Ovary (tissue), 10 donors: ENCODE measurements at regions of chr19 and their contacts with region 1.

Region 1: DNA sequence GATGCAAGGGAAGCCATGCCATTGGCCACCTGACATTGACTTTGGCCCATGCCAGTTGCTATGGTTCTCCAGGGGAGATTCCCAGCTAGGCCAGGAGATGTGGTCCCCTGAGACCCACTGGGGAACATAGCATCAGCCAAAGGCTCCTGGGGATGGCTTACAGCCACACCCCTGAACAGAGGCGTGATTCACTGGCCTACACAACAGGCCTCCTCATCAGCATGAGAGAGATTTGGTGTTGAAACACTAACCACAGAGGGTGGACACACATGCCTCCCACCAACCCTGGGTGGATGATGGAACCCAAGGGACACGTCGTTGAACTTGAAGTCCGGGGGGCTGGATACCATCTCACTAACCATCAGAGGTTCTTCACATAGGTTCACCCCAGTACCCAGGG is 14.4 kb downstream of the IQCN start:
- DNase-seq: no peak
- H3K4me3 ChIP-seq: no peak overlapping the region
- H3K27ac ChIP-seq: no peak overlapping the region
- H3K4me1 ChIP-seq: no peaks in the 10 kb centered on the region
- H3K27me3 ChIP-seq: no peaks in the 10 kb centered on the region
- CTCF ChIP-seq: no peak
- EP300 ChIP-seq: no peak
- POLR2A ChIP-seq: no peak

Region 2: DNA sequence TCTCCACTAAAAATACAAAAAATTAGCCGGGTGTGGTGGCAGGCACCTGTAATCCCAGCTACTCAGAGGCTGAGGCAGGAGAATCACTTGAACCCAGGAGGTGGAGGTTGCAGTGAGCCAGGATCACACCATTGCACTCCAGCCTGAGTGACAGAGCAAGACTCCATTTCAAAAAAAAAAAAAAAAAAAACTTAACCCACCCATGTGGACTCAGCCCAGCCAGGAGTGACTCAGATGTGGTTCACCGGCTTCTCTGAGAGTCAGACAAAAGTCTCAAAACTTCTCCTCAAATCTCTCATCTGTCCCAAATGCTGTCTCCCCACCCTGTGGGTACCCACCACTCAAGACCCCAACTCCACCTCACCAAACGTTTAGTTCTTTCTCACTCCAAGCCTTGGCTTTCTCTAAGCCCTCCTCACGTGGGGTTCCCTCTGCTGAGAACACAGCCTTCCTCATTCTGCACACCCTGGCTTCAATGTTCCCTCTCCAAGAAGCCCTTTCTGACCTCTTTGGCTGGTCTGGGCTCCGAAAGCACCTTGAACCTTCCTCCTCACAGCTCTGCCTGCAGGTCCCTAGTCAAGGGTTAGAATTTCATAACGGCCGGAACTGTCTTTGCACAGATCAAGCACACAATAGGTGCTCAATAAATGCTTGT is 45.0 kb before region 1 on chr19:
- intact Hi-C with region 1: loop called in 1 of 4 experiments (anchors 10 kb)
- DNase-seq: no peak
- H3K4me3 ChIP-seq: no peak overlapping the region
- H3K27ac ChIP-seq: no peak overlapping the region
- H3K4me1 ChIP-seq: no peaks in the 10 kb centered on the region
- H3K27me3 ChIP-seq: no peaks in the 10 kb centered on the region
- CTCF ChIP-seq: no peak
- EP300 ChIP-seq: no peak
- POLR2A ChIP-seq: no peak